MCF 10A (cell line): ENCODE measurements at regions of chr1 and their contacts with region 1.

Region 1: GRCh38 chr1:39098546-39099250 is 72.5 kb downstream of the NDUFS5 start:
- DNase-seq: peak; percentile 84
- H3K4me3 Mint-ChIP-seq: no peak overlapping the region
- H3K27ac Mint-ChIP-seq: no peak overlapping the region
- H3K4me1 Mint-ChIP-seq: peaks cover 18% of the 10 kb centered on the region
- H3K27me3 Mint-ChIP-seq: no peaks in the 10 kb centered on the region
- CTCF ChIP-seq: peak; percentile 77

Region 2: DNA sequence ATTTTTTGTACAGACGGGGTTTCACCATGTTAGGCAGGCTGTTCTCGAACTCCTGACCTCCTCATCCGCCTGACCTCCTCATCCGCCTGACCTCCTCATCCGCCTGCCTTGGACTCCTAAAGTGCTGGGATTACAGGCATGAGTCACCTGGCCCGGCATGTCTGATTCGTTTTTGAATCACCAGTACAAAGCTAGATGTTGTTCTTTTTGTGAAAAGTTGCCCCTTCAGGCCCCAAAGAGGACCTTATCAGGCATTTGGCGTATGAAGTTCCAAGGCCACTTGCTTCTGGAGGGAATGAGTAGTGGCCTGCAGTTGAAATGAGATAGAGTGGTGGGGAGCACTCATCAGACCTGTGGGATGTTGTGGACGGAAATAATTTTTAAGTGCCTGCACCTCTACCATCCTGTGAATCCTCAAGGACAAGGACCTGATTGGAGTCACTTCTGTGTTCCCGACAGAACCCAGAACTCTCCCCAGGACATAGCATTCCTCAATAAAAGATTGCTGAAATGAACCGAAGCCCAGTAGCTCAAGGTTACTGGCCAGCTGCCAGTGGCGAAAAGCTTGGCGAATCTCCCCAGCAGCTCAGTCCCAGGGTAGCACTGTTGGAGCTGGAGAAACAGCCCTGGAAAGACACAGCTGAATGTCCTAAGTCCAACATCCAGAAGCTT is 22.4 kb before region 1 on chr1:
- CTCF ChIA-PET with region 1: interaction called, 25 read pairs
- POLR2A ChIA-PET with region 1: no interaction called
- intact Hi-C with region 1: no loop called
- DNase-seq: peak; percentile 38
- H3K4me3 Mint-ChIP-seq: no peak overlapping the region
- H3K27ac Mint-ChIP-seq: no peak overlapping the region
- H3K4me1 Mint-ChIP-seq: no peaks in the 10 kb centered on the region
- H3K27me3 Mint-ChIP-seq: no peaks in the 10 kb centered on the region
- CTCF ChIP-seq: no peak

Region 3: GRCh38 chr1:39142401-39143151 is 43.9 kb after region 1 on chr1:
- CTCF ChIA-PET with region 1: interaction called, 11 read pairs
- POLR2A ChIA-PET with region 1: interaction called, 15 read pairs
- intact Hi-C with region 1: no loop called
- DNase-seq: peak; percentile 87
- H3K4me3 Mint-ChIP-seq: no peak overlapping the region
- H3K27ac Mint-ChIP-seq: peak overlapping the region; percentile 49
- H3K4me1 Mint-ChIP-seq: peaks cover 36% of the 10 kb centered on the region
- H3K27me3 Mint-ChIP-seq: no peaks in the 10 kb centered on the region
- CTCF ChIP-seq: no peak

Region 4: GRCh38 chr1:39189592-39190041 is 90.9 kb after region 1 on chr1:
- CTCF ChIA-PET with region 1: interaction called, 75 read pairs
- POLR2A ChIA-PET with region 1: interaction called, 84 read pairs
- intact Hi-C with region 1: loop called (anchors 1 kb)
- DNase-seq: no peak
- H3K4me3 Mint-ChIP-seq: no peak overlapping the region
- H3K27ac Mint-ChIP-seq: peak overlapping the region; percentile 96
- H3K4me1 Mint-ChIP-seq: peaks cover 56% of the 10 kb centered on the region
- H3K27me3 Mint-ChIP-seq: no peaks in the 10 kb centered on the region
- CTCF ChIP-seq: no peak

Region 5: DNA sequence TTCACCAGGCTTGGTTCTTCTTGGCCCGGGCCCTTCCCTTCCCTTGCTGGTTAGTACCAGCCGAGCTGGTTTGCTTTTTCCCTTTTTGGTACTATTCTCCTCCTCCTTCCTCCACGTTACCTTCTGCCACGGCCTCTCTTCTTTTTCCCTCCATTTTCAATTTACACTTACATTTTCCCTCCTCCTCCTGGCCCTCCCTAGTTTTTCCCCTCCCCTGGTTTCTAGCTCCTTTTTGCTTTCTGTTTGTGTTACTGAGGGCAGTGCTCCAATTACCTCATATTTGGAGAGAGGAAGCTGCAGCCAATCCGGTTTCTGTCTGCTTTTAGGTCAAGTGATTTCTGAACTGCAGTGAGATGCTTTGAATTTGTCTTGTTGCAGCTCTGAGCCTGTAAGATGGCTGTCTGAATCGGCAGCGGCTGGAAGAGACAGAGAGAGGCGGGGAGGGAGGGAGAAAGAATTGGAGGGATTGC is 169.4 kb after region 1 on chr1:
- CTCF ChIA-PET with region 1: interaction called, 107 read pairs
- POLR2A ChIA-PET with region 1: interaction called, 7 read pairs
- intact Hi-C with region 1: no loop called
- DNase-seq: peak; percentile 65
- H3K4me3 Mint-ChIP-seq: peak overlapping the region; percentile 68
- H3K27ac Mint-ChIP-seq: peak overlapping the region; percentile 90
- H3K4me1 Mint-ChIP-seq: peaks cover 46% of the 10 kb centered on the region
- H3K27me3 Mint-ChIP-seq: no peaks in the 10 kb centered on the region
- CTCF ChIP-seq: no peak

Region 6: DNA sequence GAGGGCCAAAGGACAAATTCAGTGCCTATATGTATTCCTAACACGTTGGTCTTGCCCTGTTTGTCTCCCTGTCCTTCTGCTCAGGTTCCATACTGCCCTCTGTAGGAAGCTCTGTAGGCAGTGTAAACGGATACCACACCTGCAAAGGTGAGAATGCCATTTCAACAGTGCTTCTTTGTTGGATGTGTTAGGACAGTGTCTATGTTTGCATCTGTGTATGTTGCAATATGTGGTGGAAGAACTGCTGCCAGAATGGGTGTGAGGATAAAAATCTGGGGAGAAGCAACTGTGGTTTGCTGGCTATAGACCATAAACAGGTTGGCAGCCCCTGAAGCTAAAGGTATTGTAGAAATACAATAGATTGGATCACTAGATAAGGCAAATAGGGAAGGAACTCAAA is 279.7 kb after region 1 on chr1:
- CTCF ChIA-PET with region 1: interaction called, 31 read pairs
- POLR2A ChIA-PET with region 1: no interaction called
- intact Hi-C with region 1: loop called (anchors 2 kb)
- DNase-seq: peak; percentile 80
- H3K4me3 Mint-ChIP-seq: no peak overlapping the region
- H3K27ac Mint-ChIP-seq: no peak overlapping the region
- H3K4me1 Mint-ChIP-seq: peaks cover 7% of the 10 kb centered on the region
- H3K27me3 Mint-ChIP-seq: no peaks in the 10 kb centered on the region
- CTCF ChIP-seq: peak; percentile 41

Region 7: GRCh38 chr1:39609618-39610331 is 511.1 kb after region 1 on chr1:
- CTCF ChIA-PET with region 1: interaction called, 4 read pairs
- POLR2A ChIA-PET with region 1: no interaction called
- intact Hi-C with region 1: loop called (anchors 2 kb)
- DNase-seq: peak; percentile 22
- H3K4me3 Mint-ChIP-seq: no peak overlapping the region
- H3K27ac Mint-ChIP-seq: no peak overlapping the region
- H3K4me1 Mint-ChIP-seq: no peaks in the 10 kb centered on the region
- H3K27me3 Mint-ChIP-seq: no peaks in the 10 kb centered on the region
- CTCF ChIP-seq: peak; percentile 28